HEK293 (cell line): ENCODE measurements at regions of chr12 and their contacts with region 1.

Region 1: GRCh38 chr12:113174461-113175384 is 10.6 kb downstream of the DDX54 start:
- H3K4me3 ChIP-seq: no peak overlapping the region
- H3K27ac ChIP-seq: no peak overlapping the region
- H3K4me1 ChIP-seq: no peaks in the 10 kb centered on the region
- CTCF ChIP-seq: peak; percentile 83

Region 2: GRCh38 chr12:113065126-113066007 is 109.4 kb before region 1 on chr12:
- CTCF ChIA-PET with region 1: interaction called, 10 read pairs
- POLR2A ChIA-PET with region 1: no interaction called
- H3K4me3 ChIP-seq: no peak overlapping the region
- H3K27ac ChIP-seq: no peak overlapping the region
- H3K4me1 ChIP-seq: no peaks in the 10 kb centered on the region
- CTCF ChIP-seq: no peak

Region 3: DNA sequence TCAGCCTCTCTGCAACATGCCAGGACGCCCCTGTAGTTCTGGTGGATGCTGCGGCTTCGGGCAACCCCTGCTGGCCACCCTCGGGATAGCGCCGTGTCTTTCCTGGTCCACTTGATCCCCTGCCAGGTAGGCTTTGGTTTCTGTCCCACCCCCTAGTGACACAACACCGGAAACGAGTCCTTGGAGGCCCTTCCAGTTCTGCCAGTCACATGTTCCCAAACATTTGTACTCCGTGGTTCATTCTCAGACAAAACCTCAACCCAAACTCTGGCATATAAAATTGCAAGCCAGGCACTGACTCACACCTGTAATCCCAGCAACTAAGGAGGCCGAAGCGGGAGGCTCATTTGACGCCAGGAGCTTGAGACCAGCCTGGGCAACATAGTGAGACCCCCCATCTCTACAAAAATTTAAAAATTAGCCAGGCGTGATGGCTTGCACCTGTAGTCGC is 76.3 kb before region 1 on chr12:
- CTCF ChIA-PET with region 1: interaction called, 10 read pairs
- POLR2A ChIA-PET with region 1: no interaction called
- H3K4me3 ChIP-seq: no peak overlapping the region
- H3K27ac ChIP-seq: no peak overlapping the region
- H3K4me1 ChIP-seq: no peaks in the 10 kb centered on the region
- CTCF ChIP-seq: peak; percentile 79

Region 4: GRCh38 chr12:113152835-113153814 is 21.6 kb before region 1 on chr12:
- CTCF ChIA-PET with region 1: interaction called, 11 read pairs
- POLR2A ChIA-PET with region 1: interaction called, 4 read pairs
- H3K4me3 ChIP-seq: peak overlapping the region; percentile 49
- H3K27ac ChIP-seq: no peak overlapping the region; the same call in 1 of the 2 replicates
- H3K4me1 ChIP-seq: 0 out of 2 replicates have a peak, but pooled peaks cover 3% of the 10 kb centered on the region
- CTCF ChIP-seq: peak; percentile 87

Region 5: DNA sequence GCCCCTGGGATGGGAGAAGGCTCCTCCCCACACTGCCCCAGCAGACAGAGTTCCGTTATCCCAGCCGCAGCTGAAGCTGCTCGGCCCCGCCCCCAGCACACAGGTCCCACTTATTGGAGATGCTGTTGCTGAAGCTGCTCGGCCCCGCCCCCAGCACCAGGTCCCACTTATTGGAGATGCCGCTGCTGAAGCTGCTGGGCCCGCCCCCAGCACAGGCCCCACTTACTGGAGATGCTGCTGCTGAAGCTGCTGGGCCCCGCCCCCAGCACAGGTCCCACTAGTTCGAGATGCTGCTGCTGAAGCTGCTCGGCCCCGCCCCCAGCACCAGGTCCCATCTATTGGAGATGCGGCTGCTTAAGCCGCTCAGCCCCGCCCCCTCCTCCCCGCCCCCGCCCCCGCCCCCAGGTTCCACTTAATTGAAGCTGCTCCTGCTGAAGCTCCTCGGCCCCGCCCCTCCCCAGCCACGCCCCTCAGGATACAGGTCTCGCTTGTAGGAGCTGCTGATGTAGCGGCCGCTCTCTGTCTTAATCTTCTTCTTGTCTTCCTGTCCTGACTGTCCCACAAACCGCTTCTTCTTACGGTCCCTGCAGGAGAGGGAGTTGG is 13.2 kb before region 1 on chr12:
- CTCF ChIA-PET with region 1: interaction called, 12 read pairs
- POLR2A ChIA-PET with region 1: interaction called, 4 read pairs
- H3K4me3 ChIP-seq: no peak overlapping the region
- H3K27ac ChIP-seq: no peak overlapping the region
- H3K4me1 ChIP-seq: no peaks in the 10 kb centered on the region; the same call in 1 of the 2 replicates
- CTCF ChIP-seq: no peak

Region 6: GRCh38 chr12:113184900-113185773 is 10.4 kb after region 1 on chr12 and contains the starts of genes DDX54 and RITA1:
- CTCF ChIA-PET with region 1: interaction called, 11 read pairs
- POLR2A ChIA-PET with region 1: interaction called, 16 read pairs
- H3K4me3 ChIP-seq: peak within 1 kb of the TSS; percentile 99
- H3K27ac ChIP-seq: peak within 1 kb of the TSS; percentile 94
- H3K4me1 ChIP-seq: peaks cover 3% of the 10 kb centered on the region; the same call in 1 of the 2 replicates
- CTCF ChIP-seq: no peak